ENCODE measurements at regions of chr17 and their contacts with region 1.

Region 1: DNA sequence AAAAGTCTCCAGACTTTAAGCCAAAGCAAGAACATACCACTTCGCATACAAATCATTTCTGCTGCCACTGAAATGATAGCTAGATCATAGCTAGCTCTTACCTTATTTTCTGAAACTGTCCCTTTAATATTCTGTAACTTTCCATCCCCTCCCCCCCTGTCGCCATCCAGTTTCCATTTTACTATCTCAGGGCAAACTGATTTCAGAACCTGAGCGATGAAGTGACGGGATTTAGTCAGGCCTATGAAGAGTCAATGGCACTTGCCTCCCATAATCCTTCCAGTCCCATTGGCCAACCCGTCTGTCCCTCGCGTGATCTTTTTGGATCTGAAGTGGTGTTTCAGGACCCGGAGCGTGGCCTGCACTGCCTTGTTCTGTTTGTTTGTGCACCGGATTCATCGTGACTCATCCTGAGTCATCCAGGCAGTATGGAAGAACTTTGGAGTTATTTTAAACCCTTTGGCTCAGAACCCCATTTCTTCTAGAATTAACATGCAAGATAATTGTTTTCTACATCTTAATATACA is 199.8 kb upstream of the CHMP6 start:
- DNase-seq: peak; percentile 50 to 90
- H3K4me3 ChIP-seq: no peak overlapping the region
- H3K27ac ChIP-seq: peak overlapping the region in 1 of 2 donors; percentile 79
- H3K4me1 ChIP-seq: peaks cover 11 to 29% of the 10 kb centered on the region in 2 donors
- H3K27me3 ChIP-seq: no peaks in the 10 kb centered on the region
- CTCF ChIP-seq: no peak

Region 2: DNA sequence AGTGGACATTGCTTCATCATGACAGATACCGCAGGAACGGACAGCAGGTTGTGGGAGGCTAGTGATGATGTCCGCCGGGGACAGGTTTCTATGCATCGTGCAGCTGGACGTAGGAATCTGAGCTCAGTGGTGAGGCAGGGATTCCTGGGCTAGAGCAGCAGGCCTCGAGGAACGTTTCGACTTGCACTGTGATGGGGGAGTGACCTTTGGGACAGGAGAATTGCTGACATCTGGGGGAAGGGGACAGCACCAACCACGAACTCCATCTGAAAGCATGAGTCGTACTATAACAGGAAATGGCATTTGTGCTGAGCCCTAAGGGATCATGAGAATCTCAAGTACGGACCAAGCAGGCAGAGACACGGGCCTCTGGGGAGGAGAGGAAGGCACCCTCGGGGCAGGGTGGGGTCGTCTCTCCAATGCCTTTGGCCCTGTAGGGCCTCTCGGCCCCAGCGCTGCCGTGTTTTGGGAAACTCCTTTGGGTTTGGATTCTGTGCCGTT is 442.6 kb before region 1 on chr17:
- intact Hi-C with region 1: no loop called
- DNase-seq: no peak
- H3K4me3 ChIP-seq: no peak overlapping the region
- H3K27ac ChIP-seq: no peak overlapping the region
- H3K4me1 ChIP-seq: no peaks in the 10 kb centered on the region
- H3K27me3 ChIP-seq: no peaks in the 10 kb centered on the region
- CTCF ChIP-seq: no peak

Region 3: GRCh38 chr17:80826955-80827645 is 35.3 kb after region 1 on chr17:
- intact Hi-C with region 1: loop called (anchors 5 kb)
- DNase-seq: peak; percentile 72 to 95
- H3K4me3 ChIP-seq: peak overlapping the region in 1 of 2 donors; percentile 31
- H3K27ac ChIP-seq: peak overlapping the region; percentile 75 to 80
- H3K4me1 ChIP-seq: peaks cover 4 to 12% of the 10 kb centered on the region in 2 donors
- H3K27me3 ChIP-seq: no peaks in the 10 kb centered on the region
- CTCF ChIP-seq: peak in 2 of 3 experiments; percentile 19 to 32